ENCODE measurements at regions of chr5 and their contacts with region 1.

Region 1: DNA sequence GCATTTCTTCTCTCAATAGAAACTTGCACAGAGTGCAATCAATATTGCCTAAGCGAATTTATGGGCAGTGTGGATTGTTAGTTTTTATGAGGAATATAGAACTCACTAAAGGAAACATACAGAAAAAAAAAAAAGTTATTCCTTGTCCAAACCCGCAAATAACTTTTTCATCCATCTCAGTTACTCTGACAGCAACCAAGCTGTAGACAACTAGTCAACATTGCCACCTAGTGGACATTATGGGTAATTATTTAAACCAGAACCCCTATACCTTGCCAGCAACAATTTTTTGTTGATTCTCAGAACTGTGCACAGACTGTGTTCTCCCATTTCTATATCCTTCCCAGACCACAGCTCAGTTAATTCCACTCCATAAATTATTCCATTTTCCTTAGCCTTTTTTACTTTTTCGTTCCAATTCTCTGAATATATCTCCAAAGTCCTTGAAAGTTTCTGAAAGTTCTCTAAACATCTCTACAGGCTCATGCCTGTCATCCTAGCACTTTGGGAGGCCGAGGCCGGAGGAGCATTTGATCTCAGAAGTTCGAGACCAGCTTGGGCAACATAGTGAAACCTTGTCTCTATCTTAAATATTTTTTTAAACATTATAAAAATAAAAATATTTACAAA is 2.6 kb upstream of the AFAP1L1 start:
- DNase-seq: no peak
- H3K4me3 Mint-ChIP-seq: no peak overlapping the region
- H3K27ac Mint-ChIP-seq: no peak overlapping the region
- H3K4me1 Mint-ChIP-seq: peaks cover 16% of the 10 kb centered on the region
- H3K27me3 Mint-ChIP-seq: peaks cover 20% of the 10 kb centered on the region

Region 2: DNA sequence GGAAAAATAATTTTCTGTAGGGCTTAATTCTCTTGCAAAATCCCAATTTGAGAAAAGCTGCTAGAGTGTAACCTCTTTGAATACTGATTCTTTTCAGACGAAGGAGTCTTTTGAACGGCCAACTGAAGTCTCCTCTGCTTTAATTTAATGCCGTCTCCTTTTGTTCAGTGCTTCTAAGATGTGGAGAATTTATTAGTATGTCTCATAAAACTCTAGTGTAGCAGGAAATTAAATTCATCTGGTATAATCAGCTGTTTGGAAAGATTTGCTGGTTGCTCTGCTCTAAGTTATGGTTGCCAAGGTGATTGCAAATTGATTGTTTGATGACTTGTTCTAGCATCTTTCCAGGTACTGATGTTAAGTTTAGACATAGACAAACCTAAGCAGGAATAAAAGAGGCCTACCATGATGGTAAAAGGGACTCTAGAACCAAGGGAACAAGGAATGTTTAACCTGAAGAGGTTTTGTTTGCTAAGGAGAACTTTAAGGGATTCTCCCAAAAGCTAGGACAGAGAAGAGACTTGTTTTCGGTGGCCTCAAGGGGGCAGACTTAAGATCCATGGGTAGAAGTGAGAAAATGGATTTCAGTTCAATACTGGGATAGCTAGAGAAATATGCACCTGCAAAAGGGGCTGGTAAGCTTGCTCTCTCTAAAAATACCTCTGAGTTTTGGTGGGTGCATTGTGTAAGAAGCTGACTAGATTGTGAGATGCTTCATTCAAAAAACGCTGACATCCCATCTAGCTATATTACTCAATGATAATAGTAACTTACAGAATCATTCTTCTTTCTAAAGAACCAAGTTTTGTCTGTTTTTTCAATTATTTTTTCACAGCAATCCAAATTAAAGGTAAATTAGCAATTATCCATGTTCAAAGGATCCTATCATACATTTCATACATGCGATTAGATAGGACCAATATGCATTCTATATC is 448.3 kb before region 1 on chr5:
- CTCF ChIA-PET with region 1: no interaction called
- intact Hi-C with region 1: loop called (anchors 5 kb)
- DNase-seq: no peak
- H3K4me3 Mint-ChIP-seq: no peak overlapping the region
- H3K27ac Mint-ChIP-seq: no peak overlapping the region
- H3K4me1 Mint-ChIP-seq: peaks cover 5% of the 10 kb centered on the region
- H3K27me3 Mint-ChIP-seq: peaks cover 18% of the 10 kb centered on the region

Region 3: GRCh38 chr5:149141224-149141956 is 127.7 kb before region 1 on chr5 and contains the start of gene ABLIM3:
- CTCF ChIA-PET with region 1: interaction called, 88 read pairs
- intact Hi-C with region 1: loop called (anchors 1 kb)
- DNase-seq: peak; percentile 67
- H3K4me3 Mint-ChIP-seq: peak within 1 kb of the TSS; percentile 45
- H3K27ac Mint-ChIP-seq: no peak within 1 kb of the TSS
- H3K4me1 Mint-ChIP-seq: peaks cover 2% of the 10 kb centered on the region
- H3K27me3 Mint-ChIP-seq: peaks cover 14% of the 10 kb centered on the region
- total RNA-seq, gene ABLIM3: not detected

Region 4: DNA sequence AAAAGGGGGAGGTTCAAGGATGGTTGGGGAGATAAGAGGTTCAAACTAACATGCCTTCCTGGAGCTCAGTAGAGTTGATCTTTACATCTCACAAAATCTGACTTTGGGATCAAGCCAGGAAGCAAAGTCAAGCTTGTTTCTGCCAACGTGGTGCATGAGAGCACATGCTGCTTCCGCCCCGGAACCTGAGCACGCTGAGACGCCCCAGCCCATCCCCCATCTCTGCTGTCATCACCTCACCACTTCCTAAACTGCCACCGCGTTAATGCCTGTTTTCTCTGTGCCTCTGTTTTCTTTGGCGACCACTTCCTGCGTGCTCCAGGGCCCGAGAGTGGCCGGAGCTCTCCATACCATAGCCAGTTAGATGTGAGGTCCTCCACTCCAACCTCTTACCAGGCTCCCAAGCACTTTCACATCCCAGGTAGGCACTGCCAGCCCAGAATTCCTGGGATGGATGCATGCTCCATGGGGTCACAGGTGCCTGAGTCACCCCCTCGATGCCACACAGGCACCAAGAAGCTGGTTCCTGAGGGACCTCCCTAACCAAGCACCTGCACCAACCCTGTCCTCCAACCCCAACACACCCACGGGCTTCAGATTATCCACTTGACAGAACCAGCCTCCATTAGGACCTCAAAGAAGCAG is 28.6 kb before region 1 on chr5:
- CTCF ChIA-PET with region 1: interaction called, 11 read pairs
- intact Hi-C with region 1: loop called (anchors 2 kb)
- DNase-seq: peak; percentile 95
- H3K4me3 Mint-ChIP-seq: peak overlapping the region; percentile 19
- H3K27ac Mint-ChIP-seq: peak overlapping the region; percentile 80
- H3K4me1 Mint-ChIP-seq: peaks cover 33% of the 10 kb centered on the region
- H3K27me3 Mint-ChIP-seq: no peaks in the 10 kb centered on the region

Region 5: DNA sequence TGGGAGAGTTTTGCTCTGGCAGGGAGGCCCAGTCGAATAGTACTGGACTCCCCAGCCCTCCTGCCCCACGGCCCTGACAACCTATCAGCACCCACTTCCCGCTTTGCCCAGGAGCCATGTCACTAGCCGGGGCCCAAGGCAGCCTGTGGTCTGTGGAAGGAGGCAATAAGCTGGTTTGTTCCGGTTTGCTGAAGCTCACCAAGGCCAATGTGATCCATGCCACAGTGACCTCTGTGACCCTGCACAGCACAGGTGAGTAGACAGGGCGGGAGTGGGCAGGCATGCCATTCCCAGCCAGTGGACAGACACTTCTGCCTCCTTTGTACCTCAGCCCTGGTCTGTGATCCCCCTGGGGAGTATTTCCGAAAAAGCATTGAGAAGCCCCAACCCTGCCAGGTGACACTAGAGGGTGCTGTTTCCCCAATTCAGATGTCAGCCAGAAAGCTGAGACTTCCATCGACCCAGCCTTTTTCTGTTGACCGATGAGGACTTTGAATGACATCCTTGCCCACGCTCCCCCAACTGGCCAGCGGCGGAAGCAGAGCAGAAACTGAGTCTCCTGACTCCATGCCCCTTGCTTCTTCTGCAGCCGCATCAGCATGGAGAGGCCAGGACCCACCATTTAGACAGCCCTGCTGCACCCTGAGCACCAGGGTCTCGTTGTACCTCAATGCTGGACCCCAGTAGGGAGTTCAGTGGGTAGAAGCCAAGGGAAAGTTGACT is 98.4 kb after region 1 on chr5:
- CTCF ChIA-PET with region 1: interaction called, 7 read pairs
- intact Hi-C with region 1: loop called (anchors 1 kb)
- DNase-seq: peak; percentile 72
- H3K4me3 Mint-ChIP-seq: no peak overlapping the region
- H3K27ac Mint-ChIP-seq: no peak overlapping the region
- H3K4me1 Mint-ChIP-seq: peaks cover 10% of the 10 kb centered on the region
- H3K27me3 Mint-ChIP-seq: no peaks in the 10 kb centered on the region

Region 6: GRCh38 chr5:150138551-150139265 is 869.7 kb after region 1 on chr5:
- CTCF ChIA-PET with region 1: no interaction called
- intact Hi-C with region 1: no loop called
- DNase-seq: no peak
- H3K4me3 Mint-ChIP-seq: no peak overlapping the region
- H3K27ac Mint-ChIP-seq: no peak overlapping the region
- H3K4me1 Mint-ChIP-seq: no peaks in the 10 kb centered on the region
- H3K27me3 Mint-ChIP-seq: no peaks in the 10 kb centered on the region